IMR-90 (cell line): ENCODE measurements at regions of chr12 and their contacts with region 1.

Region 1: DNA sequence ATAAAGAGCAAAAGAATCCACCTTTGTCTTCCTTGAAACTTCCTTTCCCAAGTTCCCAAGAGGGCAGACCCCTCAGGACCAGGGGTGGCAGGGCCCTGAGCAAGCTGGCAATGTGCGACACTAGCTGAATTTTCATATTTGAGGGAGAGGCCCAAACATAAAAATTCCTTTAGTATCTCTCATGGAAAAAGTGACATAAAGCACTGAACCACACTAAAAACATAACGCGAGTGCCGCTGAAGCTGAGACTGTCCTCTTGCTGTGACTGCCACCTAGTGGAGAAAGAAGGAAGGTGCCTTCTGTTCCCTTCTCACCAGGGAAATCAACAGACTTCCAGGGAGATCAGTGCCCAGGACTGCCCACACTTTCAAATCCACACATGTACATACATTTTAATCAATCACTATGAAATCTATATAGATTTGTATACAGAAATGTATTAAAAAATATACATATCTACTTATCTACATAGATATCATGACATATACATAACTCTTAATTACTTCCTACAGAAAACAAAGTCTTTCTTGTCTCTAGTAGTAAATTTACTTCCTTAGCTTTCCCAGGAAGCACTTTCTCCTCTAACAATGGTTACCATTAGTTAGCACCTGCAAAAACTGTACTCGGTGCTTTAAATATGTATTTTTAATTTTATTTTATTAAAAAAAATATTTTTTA is 53.8 kb downstream of the SSH1 start:
- DNase-seq: peak; percentile 94
- ATAC-seq: peak; percentile 47
- H3K4me3 ChIP-seq: no peak overlapping the region
- H3K27ac ChIP-seq: peak overlapping the region; percentile 97
- H3K4me1 ChIP-seq: peaks cover 45% of the 10 kb centered on the region
- H3K27me3 ChIP-seq: no peaks in the 10 kb centered on the region
- CTCF ChIP-seq: peak; percentile 96
- POLR2A ChIP-seq: peak; percentile 63
- RAD21 ChIP-seq: peak; percentile 93

Region 2: GRCh38 chr12:108511633-108512540 is 291.7 kb before region 1 on chr12:
- CTCF ChIA-PET with region 1: no interaction called
- POLR2A ChIA-PET with region 1: no interaction called
- dilution Hi-C with region 1: no loop called
- in situ Hi-C with region 1: no loop called
- intact Hi-C with region 1: no loop called
- DNase-seq: peak; percentile 65
- ATAC-seq: no peak
- H3K4me3 ChIP-seq: no peak overlapping the region
- H3K27ac ChIP-seq: no peak overlapping the region
- H3K4me1 ChIP-seq: peaks cover 3% of the 10 kb centered on the region; the same call in 1 of the 2 replicates
- H3K27me3 ChIP-seq: no peaks in the 10 kb centered on the region; the same call in 1 of the 2 replicates
- CTCF ChIP-seq: peak; percentile 81
- POLR2A ChIP-seq: no peak
- RAD21 ChIP-seq: peak; percentile 61

Region 3: GRCh38 chr12:108562348-108563135 is 241.0 kb before region 1 on chr12 and contains the start of gene ISCU:
- CTCF ChIA-PET with region 1: interaction called, 4 read pairs
- POLR2A ChIA-PET with region 1: no interaction called
- dilution Hi-C with region 1: no loop called
- in situ Hi-C with region 1: loop called (anchors 5 kb)
- intact Hi-C with region 1: loop called (anchors 1 kb)
- DNase-seq: peak; percentile 95
- ATAC-seq: peak; percentile 86
- H3K4me3 ChIP-seq: peak within 1 kb of the TSS; percentile 92
- H3K27ac ChIP-seq: peak within 1 kb of the TSS; percentile 89
- H3K4me1 ChIP-seq: no peaks in the 10 kb centered on the region
- H3K27me3 ChIP-seq: no peaks in the 10 kb centered on the region
- CTCF ChIP-seq: no peak
- POLR2A ChIP-seq: peak; percentile 88
- RAD21 ChIP-seq: no peak
- total RNA-seq, gene ISCU: 52.7 and 58.3 TPM in 2 replicates

Region 4: DNA sequence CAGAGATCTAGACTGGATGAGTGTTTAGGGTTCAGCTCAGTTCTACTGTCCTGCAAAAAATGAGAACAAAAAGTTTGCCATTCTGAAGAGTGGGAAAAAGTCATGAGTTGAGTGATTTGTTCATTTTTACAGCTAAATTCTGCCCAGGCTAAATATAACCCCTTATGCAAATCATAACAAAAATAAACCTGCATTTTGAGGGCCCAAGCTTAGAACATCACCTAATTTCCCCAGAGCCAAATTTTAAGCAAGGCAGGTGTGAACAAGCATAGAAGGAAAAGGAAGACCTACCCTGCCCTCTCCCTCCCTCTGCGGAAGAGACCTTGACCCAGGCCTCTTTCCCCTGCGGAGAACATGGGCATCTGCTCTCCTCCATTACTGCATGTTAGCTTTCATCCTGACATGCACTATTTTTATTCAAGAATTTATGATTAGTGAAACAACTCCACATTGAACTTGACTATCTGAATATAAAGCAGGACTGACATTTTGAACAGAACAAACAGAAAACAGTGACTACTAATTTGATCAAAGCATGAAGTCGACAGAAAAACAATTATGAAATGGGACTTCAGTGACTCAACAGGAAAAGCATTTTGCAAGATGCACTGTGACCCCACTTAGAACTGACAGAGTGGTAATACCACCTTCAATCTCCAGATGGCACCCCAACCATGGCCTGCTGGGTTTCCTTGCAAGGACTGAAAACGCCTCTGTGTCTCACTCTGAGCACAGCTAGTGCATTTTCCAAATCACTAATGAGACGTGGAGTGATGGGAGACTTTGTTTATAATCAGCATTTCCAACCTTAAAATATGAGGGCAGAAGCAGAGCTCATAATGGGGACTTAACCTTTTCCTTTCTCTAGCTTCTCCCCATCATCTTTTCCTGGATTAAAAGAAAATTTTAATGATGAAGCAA is 139.0 kb before region 1 on chr12:
- CTCF ChIA-PET with region 1: interaction called, 32 read pairs
- POLR2A ChIA-PET with region 1: no interaction called
- dilution Hi-C with region 1: no loop called
- in situ Hi-C with region 1: loop called (anchors 5 kb)
- intact Hi-C with region 1: loop called (anchors 1 kb)
- DNase-seq: peak; percentile 95
- ATAC-seq: peak; percentile 92
- H3K4me3 ChIP-seq: no peak overlapping the region
- H3K27ac ChIP-seq: peak overlapping the region; percentile 85
- H3K4me1 ChIP-seq: peaks cover 30% of the 10 kb centered on the region
- H3K27me3 ChIP-seq: no peaks in the 10 kb centered on the region
- CTCF ChIP-seq: peak; percentile 98
- POLR2A ChIP-seq: peak; percentile 31; the same call in 1 of the 2 replicates
- RAD21 ChIP-seq: peak; percentile 99

Region 5: DNA sequence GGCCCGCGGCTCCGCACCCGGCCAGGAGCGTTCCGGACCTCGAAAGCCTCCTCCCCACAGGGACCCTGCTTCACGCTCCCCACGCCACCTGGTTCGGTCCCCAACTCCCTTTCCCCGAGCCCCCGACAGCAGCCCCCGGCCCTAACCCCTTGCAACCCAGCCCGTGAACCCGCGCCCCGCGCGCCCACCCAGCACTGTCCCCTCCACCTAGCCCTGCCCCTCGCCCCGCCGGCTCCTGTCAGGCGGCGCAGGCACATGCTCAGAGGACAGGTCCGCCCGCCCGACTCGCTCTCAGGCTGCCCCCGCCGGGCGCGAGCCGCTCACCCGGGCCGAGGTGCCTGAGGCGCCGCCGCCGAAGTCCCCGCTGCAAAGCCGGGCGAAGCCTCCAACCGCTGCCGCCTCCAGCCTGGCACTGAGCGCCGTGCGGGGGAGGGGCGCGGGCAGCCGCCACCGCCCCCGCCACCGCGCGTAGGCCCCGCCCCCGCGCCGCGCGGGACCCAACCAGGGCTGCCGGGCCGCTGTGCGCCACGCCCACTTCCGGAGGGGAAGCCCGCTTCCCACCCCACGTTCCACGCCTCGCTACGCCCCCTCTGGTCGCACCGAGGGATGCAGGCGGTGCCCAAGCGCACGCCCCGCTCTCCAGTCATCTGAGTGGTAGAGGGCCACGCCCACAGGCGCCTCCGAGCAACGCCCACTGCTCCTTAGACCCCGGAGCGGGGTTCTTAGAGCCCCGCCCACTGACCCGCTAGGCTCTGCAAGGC is 72.3 kb before region 1 on chr12 and contains the start of gene CORO1C:
- CTCF ChIA-PET with region 1: no interaction called
- POLR2A ChIA-PET with region 1: interaction called, 3 read pairs
- dilution Hi-C with region 1: no loop called
- in situ Hi-C with region 1: no loop called
- intact Hi-C with region 1: loop called (anchors 1 kb)
- DNase-seq: peak; percentile 93
- ATAC-seq: peak; percentile 80
- H3K4me3 ChIP-seq: peak within 1 kb of the TSS; percentile 90
- H3K27ac ChIP-seq: peak within 1 kb of the TSS; percentile 99
- H3K4me1 ChIP-seq: peaks cover 8% of the 10 kb centered on the region; the same call in 1 of the 2 replicates
- H3K27me3 ChIP-seq: no peaks in the 10 kb centered on the region
- CTCF ChIP-seq: peak; percentile 95
- POLR2A ChIP-seq: peak; percentile 96
- RAD21 ChIP-seq: peak; percentile 47
- total RNA-seq, gene CORO1C: 1,042 and 1,100 TPM in 2 replicates

Region 6: GRCh38 chr12:108826101-108826806 is 22.7 kb after region 1 on chr12:
- CTCF ChIA-PET with region 1: interaction called, 7 read pairs
- POLR2A ChIA-PET with region 1: interaction called, 4 read pairs
- dilution Hi-C with region 1: no loop called
- in situ Hi-C with region 1: no loop called
- intact Hi-C with region 1: loop called (anchors 2 kb)
- DNase-seq: peak; percentile 97
- ATAC-seq: peak; percentile 75
- H3K4me3 ChIP-seq: peak overlapping the region; percentile 26; the same call in 1 of the 2 replicates
- H3K27ac ChIP-seq: peak overlapping the region; percentile 99
- H3K4me1 ChIP-seq: peaks cover 34% of the 10 kb centered on the region
- H3K27me3 ChIP-seq: no peaks in the 10 kb centered on the region
- CTCF ChIP-seq: peak; percentile 27; the same call in 1 of the 2 replicates
- POLR2A ChIP-seq: peak; percentile 79
- RAD21 ChIP-seq: peak; percentile 30; the same call in 1 of the 2 replicates

Region 7: GRCh38 chr12:108856428-108857157 is 53.0 kb after region 1 on chr12:
- CTCF ChIA-PET with region 1: interaction called, 4 read pairs
- POLR2A ChIA-PET with region 1: interaction called, 5 read pairs
- dilution Hi-C with region 1: no loop called
- in situ Hi-C with region 1: loop called (anchors 5 kb)
- intact Hi-C with region 1: loop called (anchors 1 kb)
- DNase-seq: peak; percentile 87
- ATAC-seq: peak; percentile 12
- H3K4me3 ChIP-seq: peak overlapping the region; percentile 93
- H3K27ac ChIP-seq: peak overlapping the region; percentile 100
- H3K4me1 ChIP-seq: peaks cover 28% of the 10 kb centered on the region
- H3K27me3 ChIP-seq: no peaks in the 10 kb centered on the region
- CTCF ChIP-seq: no peak
- POLR2A ChIP-seq: peak; percentile 97
- RAD21 ChIP-seq: no peak

Region 8: GRCh38 chr12:109093022-109093918 is 289.7 kb after region 1 on chr12 and contains the start of gene ALKBH2:
- CTCF ChIA-PET with region 1: no interaction called
- POLR2A ChIA-PET with region 1: no interaction called
- dilution Hi-C with region 1: no loop called
- in situ Hi-C with region 1: loop called (anchors 10 kb)
- intact Hi-C with region 1: loop called (anchors 1 kb)
- DNase-seq: peak; percentile 89
- ATAC-seq: peak; percentile 58
- H3K4me3 ChIP-seq: peak within 1 kb of the TSS; percentile 57
- H3K27ac ChIP-seq: peak within 1 kb of the TSS; percentile 43
- H3K4me1 ChIP-seq: peaks cover 7% of the 10 kb centered on the region
- H3K27me3 ChIP-seq: no peaks in the 10 kb centered on the region
- CTCF ChIP-seq: peak; percentile 99
- POLR2A ChIP-seq: peak; percentile 67
- RAD21 ChIP-seq: peak; percentile 96
- total RNA-seq, gene ALKBH2: 14.9 and 18.3 TPM in 2 replicates